Calu3 (cell line): ENCODE measurements at regions of chr12 and their contacts with region 1.

Region 1: DNA sequence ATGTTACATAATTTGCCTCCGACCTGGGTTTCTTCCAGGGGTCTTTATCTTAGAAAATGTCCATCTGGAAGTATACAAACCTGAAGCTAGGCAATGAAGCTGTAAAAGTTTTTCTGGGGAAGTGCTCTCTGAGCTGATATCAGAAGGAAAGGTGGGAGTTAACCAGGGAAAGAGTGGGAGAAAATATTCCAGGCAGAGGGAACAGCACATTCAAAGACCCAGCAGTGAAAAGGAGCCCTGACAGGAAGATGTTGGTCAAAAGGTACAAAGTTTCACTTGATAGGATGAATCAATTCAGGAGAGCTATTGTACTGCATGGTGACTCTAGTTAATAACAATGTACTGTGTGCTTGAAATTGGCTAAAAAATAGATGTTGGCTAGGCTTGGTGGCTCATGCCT is 17.8 kb upstream of the CIT start:
- DNase-seq: no peak
- H3K4me3 Mint-ChIP-seq: no peak overlapping the region
- H3K27ac Mint-ChIP-seq: no peak overlapping the region
- H3K4me1 Mint-ChIP-seq: no peaks in the 10 kb centered on the region
- H3K27me3 Mint-ChIP-seq: no peaks in the 10 kb centered on the region
- CTCF ChIP-seq: no peak

Region 2: DNA sequence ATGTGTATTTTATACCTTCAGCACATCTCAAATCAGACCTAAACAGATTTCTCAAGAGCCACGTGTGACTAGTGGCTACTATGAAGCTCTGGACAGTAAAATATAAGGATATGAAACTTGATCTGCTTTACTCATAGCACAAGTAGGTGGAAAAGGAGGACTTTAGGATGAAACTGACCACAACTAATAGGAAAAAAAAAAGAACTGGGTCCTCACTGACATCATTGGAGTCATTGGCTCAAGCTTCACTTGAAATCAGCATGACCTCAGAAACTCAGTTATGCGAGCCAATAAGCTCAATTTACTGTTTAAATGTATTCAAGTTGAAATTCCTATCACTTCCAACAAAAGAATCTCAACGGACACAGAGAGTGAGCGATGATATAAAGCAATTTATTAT is 16.3 kb after region 1 on chr12:
- CTCF ChIA-PET with region 1: interaction called, 10 read pairs
- intact Hi-C with region 1: no loop called
- DNase-seq: no peak
- H3K4me3 Mint-ChIP-seq: no peak overlapping the region
- H3K27ac Mint-ChIP-seq: no peak overlapping the region
- H3K4me1 Mint-ChIP-seq: peaks cover 8% of the 10 kb centered on the region
- H3K27me3 Mint-ChIP-seq: no peaks in the 10 kb centered on the region
- CTCF ChIP-seq: no peak